ENCODE measurements at regions of chr12 and their contacts with region 1.

Region 1: GRCh38 chr12:132414634-132415326 is 75.2 kb upstream of the FBRSL1 start:
- DNase-seq: peak; percentile 78 to 80
- ATAC-seq: peak; percentile 91 to 97 (median 94)
- H3K4me3 ChIP-seq: no peak overlapping the region
- H3K27ac ChIP-seq: no peak overlapping the region
- H3K4me1 ChIP-seq: peaks cover 0 to 12% (median 5%) of the 10 kb centered on the region in 9 donors
- H3K27me3 ChIP-seq: peaks cover 8 to 72% (median 64%) of the 10 kb centered on the region in 7 donors
- CTCF ChIP-seq: peak; percentile 74 to 97 (median 95)

Region 2: GRCh38 chr12:132460571-132460970 is 45.8 kb after region 1 on chr12:
- intact Hi-C with region 1: no loop called
- DNase-seq: no peak
- ATAC-seq: no peak
- H3K4me3 ChIP-seq: no peak overlapping the region
- H3K27ac ChIP-seq: no peak overlapping the region
- H3K4me1 ChIP-seq: no peaks in the 10 kb centered on the region
- H3K27me3 ChIP-seq: peaks cover 7 to 42% (median 35%) of the 10 kb centered on the region in 7 donors
- CTCF ChIP-seq: peak in 7 of 9 donors; percentile 13 to 41 (median 20)

Region 3: GRCh38 chr12:132523576-132524331 is 109.0 kb after region 1 on chr12:
- intact Hi-C with region 1: loop called (anchors 1 to 5 kb)
- DNase-seq: peak; percentile 66 to 71
- ATAC-seq: peak; percentile 61 to 77 (median 68)
- H3K4me3 ChIP-seq: no peak overlapping the region
- H3K27ac ChIP-seq: no peak overlapping the region
- H3K4me1 ChIP-seq: peaks cover 0 to 39% (median 24%) of the 10 kb centered on the region in 9 donors
- H3K27me3 ChIP-seq: no peaks in the 10 kb centered on the region
- CTCF ChIP-seq: peak; percentile 68 to 91 (median 86)

Region 4: GRCh38 chr12:132614861-132615578 is 200.2 kb after region 1 on chr12:
- intact Hi-C with region 1: loop called in 9 of 10 experiments (anchors 1 to 5 kb)
- DNase-seq: peak; percentile 83 to 85
- ATAC-seq: peak; percentile 77 to 95 (median 90)
- H3K4me3 ChIP-seq: no peak overlapping the region
- H3K27ac ChIP-seq: no peak overlapping the region
- H3K4me1 ChIP-seq: peaks cover 0 to 12% (median 9%) of the 10 kb centered on the region in 9 donors
- H3K27me3 ChIP-seq: peaks cover 27 to 71% (median 62%) of the 10 kb centered on the region in 7 donors
- CTCF ChIP-seq: peak; percentile 79 to 95 (median 90)

Measured in heart right ventricle (tissue), 16 donors.